GM12878 (cell line): ENCODE measurements at regions of chr3 and their contacts with region 1.

Region 1: GRCh38 chr3:157201648-157202278 is 41.8 kb upstream of the CCNL1 start:
- DNase-seq: no peak
- ATAC-seq: peak; percentile 93
- H3K4me3 ChIP-seq: no peak overlapping the region
- H3K27ac ChIP-seq: no peak overlapping the region
- H3K4me1 ChIP-seq: no peaks in the 10 kb centered on the region
- H3K27me3 ChIP-seq: no peaks in the 10 kb centered on the region
- CTCF ChIP-seq: peak; percentile 53 to 63 (median 60); a peak in 5 of 6 replicates
- EP300 ChIP-seq: no peak
- POLR2A ChIP-seq: no peak
- RAD21 ChIP-seq: peak; percentile 59

Region 2: GRCh38 chr3:157093096-157093495 is 108.7 kb before region 1 on chr3:
- CTCF ChIA-PET with region 1: no interaction called
- POLR2A ChIA-PET with region 1: no interaction called
- RAD21 ChIA-PET with region 1: no interaction called
- SMC1A ChIA-PET with region 1: no interaction called
- in situ Hi-C with region 1: no loop called
- intact Hi-C with region 1: no loop called
- DNase-seq: peak; percentile 64
- ATAC-seq: peak; percentile 16
- H3K4me3 ChIP-seq: no peak overlapping the region
- H3K27ac ChIP-seq: no peak overlapping the region
- H3K4me1 ChIP-seq: peaks cover 43% of the 10 kb centered on the region
- H3K27me3 ChIP-seq: no peaks in the 10 kb centered on the region
- CTCF ChIP-seq: no peak
- EP300 ChIP-seq: 0 out of 4 replicates have a peak, but pooled peaks of 1 of the 2 experiments have one; percentile 27
- POLR2A ChIP-seq: no peak
- RAD21 ChIP-seq: no peak

Region 3: GRCh38 chr3:157159762-157160657 is 41.8 kb before region 1 on chr3 and contains the start of gene CCNL1:
- CTCF ChIA-PET with region 1: interaction called, 24 read pairs
- POLR2A ChIA-PET with region 1: interaction called, 3 read pairs
- RAD21 ChIA-PET with region 1: interaction called, 9 read pairs
- SMC1A ChIA-PET with region 1: interaction called, 12 read pairs
- in situ Hi-C with region 1: no loop called
- intact Hi-C with region 1: loop called (anchors 1 kb)
- DNase-seq: peak; percentile 82
- ATAC-seq: peak; percentile 88
- H3K4me3 ChIP-seq: peak within 1 kb of the TSS; percentile 72
- H3K27ac ChIP-seq: peak within 1 kb of the TSS; percentile 99
- H3K4me1 ChIP-seq: peaks cover 11% of the 10 kb centered on the region; the same call in 1 of the 2 replicates
- H3K27me3 ChIP-seq: no peaks in the 10 kb centered on the region
- CTCF ChIP-seq: no peak
- EP300 ChIP-seq: peak; percentile 49 to 66; a peak in 2 of 4 replicates
- POLR2A ChIP-seq: peak; percentile 98
- RAD21 ChIP-seq: no peak; the same call in 1 of the 2 replicates
- polyA plus RNA-seq, gene CCNL1: 22.2 to 39.8 TPM

Region 4: GRCh38 chr3:157174649-157175498 is 26.9 kb before region 1 on chr3:
- CTCF ChIA-PET with region 1: interaction called, 15 read pairs
- POLR2A ChIA-PET with region 1: interaction called, 3 read pairs
- RAD21 ChIA-PET with region 1: interaction called, 18 read pairs
- SMC1A ChIA-PET with region 1: interaction called, 8 read pairs
- in situ Hi-C with region 1: no loop called
- intact Hi-C with region 1: no loop called
- DNase-seq: peak; percentile 97
- ATAC-seq: peak; percentile 94
- H3K4me3 ChIP-seq: peak overlapping the region; percentile 86
- H3K27ac ChIP-seq: peak overlapping the region; percentile 97
- H3K4me1 ChIP-seq: peaks cover 4% of the 10 kb centered on the region; the same call in 1 of the 2 replicates
- H3K27me3 ChIP-seq: no peaks in the 10 kb centered on the region
- CTCF ChIP-seq: no peak
- EP300 ChIP-seq: peak; percentile 42 to 77; a peak in 3 of 4 replicates
- POLR2A ChIP-seq: peak; percentile 97
- RAD21 ChIP-seq: no peak

Region 5: DNA sequence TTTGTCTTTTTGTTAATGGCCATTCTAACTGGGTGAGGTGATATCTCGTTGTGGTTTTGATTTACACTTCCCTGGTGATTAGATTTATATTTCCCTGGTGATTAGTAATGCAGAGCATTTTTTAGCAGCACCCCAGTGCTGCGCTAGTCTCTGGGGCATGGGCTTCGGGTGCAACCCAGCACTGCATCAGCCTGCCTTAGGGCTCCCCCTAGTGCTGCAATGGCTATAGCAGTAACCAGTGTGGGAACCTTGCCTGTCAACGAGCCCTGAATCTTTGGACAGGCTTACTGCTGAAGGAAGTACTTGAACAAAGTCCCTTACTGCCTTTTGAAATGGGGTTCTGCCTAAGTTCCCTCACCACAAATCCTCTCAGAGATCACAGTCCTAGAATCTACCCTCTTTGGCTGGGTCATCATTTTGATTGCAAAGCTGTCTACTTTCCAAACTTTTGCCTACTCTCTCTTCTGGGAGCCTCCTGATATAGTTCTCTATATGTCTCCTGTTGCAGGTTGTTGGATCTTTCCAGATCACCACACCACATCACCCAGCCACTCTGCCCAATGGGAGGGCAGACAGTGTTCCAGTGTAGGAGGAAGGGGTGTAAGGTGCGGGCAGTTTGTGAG is 37.4 kb after region 1 on chr3:
- CTCF ChIA-PET with region 1: interaction called, 12 read pairs
- POLR2A ChIA-PET with region 1: no interaction called
- RAD21 ChIA-PET with region 1: interaction called, 3 read pairs
- SMC1A ChIA-PET with region 1: interaction called, 3 read pairs
- in situ Hi-C with region 1: no loop called
- intact Hi-C with region 1: loop called (anchors 1 kb)
- DNase-seq: peak; percentile 8
- ATAC-seq: peak; percentile 100
- H3K4me3 ChIP-seq: no peak overlapping the region
- H3K27ac ChIP-seq: no peak overlapping the region
- H3K4me1 ChIP-seq: no peaks in the 10 kb centered on the region
- H3K27me3 ChIP-seq: no peaks in the 10 kb centered on the region; a peak in 2 of 4 replicates
- CTCF ChIP-seq: peak; percentile 94 to 96 (median 95)
- EP300 ChIP-seq: no peak
- POLR2A ChIP-seq: no peak
- RAD21 ChIP-seq: peak; percentile 89

Region 6: DNA sequence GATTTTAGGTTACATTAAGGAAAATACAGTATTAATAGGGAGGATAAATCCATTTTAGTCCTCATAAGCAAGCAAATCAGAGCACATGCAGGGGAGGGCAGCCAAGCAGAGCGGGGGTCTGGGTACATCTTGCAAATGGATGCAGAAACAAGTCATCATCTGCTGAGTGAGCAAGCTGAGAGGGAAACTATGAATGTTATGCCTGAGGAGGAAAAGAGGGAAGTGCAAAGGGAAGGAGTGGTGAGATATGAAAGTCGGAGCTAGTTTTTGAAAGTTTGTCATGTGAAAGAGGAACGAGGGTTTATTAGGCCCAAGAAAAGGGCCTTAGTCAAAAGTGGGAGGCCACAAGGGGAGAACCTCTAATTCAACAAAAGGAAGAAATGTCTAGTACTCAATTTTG is 250.3 kb after region 1 on chr3:
- CTCF ChIA-PET with region 1: no interaction called
- POLR2A ChIA-PET with region 1: no interaction called
- RAD21 ChIA-PET with region 1: no interaction called
- SMC1A ChIA-PET with region 1: no interaction called
- in situ Hi-C with region 1: no loop called
- intact Hi-C with region 1: no loop called
- DNase-seq: no peak
- ATAC-seq: no peak
- H3K4me3 ChIP-seq: no peak overlapping the region
- H3K27ac ChIP-seq: no peak overlapping the region
- H3K4me1 ChIP-seq: no peaks in the 10 kb centered on the region
- H3K27me3 ChIP-seq: no peaks in the 10 kb centered on the region; a peak in 1 of 4 replicates
- CTCF ChIP-seq: no peak
- EP300 ChIP-seq: no peak
- POLR2A ChIP-seq: no peak
- RAD21 ChIP-seq: no peak

Region 7: DNA sequence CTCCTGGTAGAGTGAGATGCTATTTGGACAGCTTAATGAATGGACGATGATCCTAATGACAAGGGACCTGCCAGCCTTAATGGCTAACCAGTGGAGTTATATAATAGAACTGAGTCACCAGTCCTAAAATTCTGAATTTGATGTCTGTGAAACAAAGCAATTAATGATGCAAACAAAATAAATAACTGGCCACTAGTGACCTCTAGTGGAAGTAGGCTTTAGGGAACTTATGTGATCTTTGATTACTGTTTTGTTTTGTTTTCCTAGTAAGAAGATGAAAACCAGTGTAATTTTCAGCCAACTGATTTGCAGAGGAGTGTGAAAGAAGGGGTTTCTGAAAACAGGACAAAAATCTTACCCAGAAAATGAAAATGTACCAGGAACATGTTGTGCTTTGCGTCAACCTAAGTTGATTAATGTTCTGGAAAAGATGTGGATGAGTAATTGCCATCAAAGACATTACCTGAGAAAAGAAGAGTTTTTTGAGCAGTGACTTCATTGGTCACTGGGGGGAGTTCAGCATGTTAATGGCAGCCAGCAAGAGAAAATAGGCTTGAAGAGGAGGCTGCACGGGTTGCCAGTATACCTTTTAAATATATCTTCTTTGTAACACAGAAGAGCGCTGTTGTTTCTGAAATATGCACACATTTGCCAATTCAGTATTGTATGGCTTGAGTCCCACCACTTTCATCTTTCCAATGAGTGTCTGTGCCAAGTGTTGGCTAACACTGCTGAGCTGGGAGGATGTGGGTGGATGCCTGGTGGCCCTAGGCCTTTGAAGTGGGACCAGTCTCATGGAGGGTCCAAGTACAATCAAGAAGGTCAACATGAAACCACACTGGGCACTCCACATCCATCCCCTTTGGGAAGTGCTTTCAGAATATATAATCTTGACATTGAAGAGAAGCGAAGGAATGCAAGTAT is 292.1 kb after region 1 on chr3:
- CTCF ChIA-PET with region 1: interaction called, 12 read pairs
- POLR2A ChIA-PET with region 1: no interaction called
- RAD21 ChIA-PET with region 1: no interaction called
- SMC1A ChIA-PET with region 1: no interaction called
- in situ Hi-C with region 1: no loop called
- intact Hi-C with region 1: loop called (anchors 5 kb)
- DNase-seq: no peak
- ATAC-seq: peak; percentile 48
- H3K4me3 ChIP-seq: no peak overlapping the region
- H3K27ac ChIP-seq: no peak overlapping the region
- H3K4me1 ChIP-seq: no peaks in the 10 kb centered on the region
- H3K27me3 ChIP-seq: no peaks in the 10 kb centered on the region; a peak in 2 of 4 replicates
- CTCF ChIP-seq: peak; percentile 39 to 58 (median 55); a peak in 5 of 6 replicates
- EP300 ChIP-seq: no peak
- POLR2A ChIP-seq: no peak
- RAD21 ChIP-seq: peak; percentile 43